MCF 10A (cell line): ENCODE measurements at regions of chr19 and their contacts with region 1.

Region 1: GRCh38 chr19:49443366-49444099 is 2.2 kb upstream of the SLC17A7 start:
- DNase-seq: peak; percentile 96
- H3K4me3 Mint-ChIP-seq: peak overlapping the region; percentile 75
- H3K27ac Mint-ChIP-seq: peak overlapping the region; percentile 85
- H3K4me1 Mint-ChIP-seq: peaks cover 28% of the 10 kb centered on the region
- H3K27me3 Mint-ChIP-seq: peaks cover 45% of the 10 kb centered on the region
- CTCF ChIP-seq: peak; percentile 63

Region 2: GRCh38 chr19:49272184-49272583 is 171.3 kb before region 1 on chr19:
- CTCF ChIA-PET with region 1: interaction called, 12 read pairs
- POLR2A ChIA-PET with region 1: no interaction called
- intact Hi-C with region 1: no loop called
- DNase-seq: peak; percentile 92
- H3K4me3 Mint-ChIP-seq: peak overlapping the region; percentile 7
- H3K27ac Mint-ChIP-seq: peak overlapping the region; percentile 90
- H3K4me1 Mint-ChIP-seq: peaks cover 13% of the 10 kb centered on the region
- H3K27me3 Mint-ChIP-seq: no peaks in the 10 kb centered on the region
- CTCF ChIP-seq: no peak

Region 3: GRCh38 chr19:49363268-49364082 is 80.1 kb before region 1 on chr19 and contains the start of gene DKKL1:
- CTCF ChIA-PET with region 1: interaction called, 3 read pairs
- POLR2A ChIA-PET with region 1: no interaction called
- intact Hi-C with region 1: loop called (anchors 1 kb)
- DNase-seq: peak; percentile 100
- H3K4me3 Mint-ChIP-seq: no peak within 1 kb of the TSS
- H3K27ac Mint-ChIP-seq: no peak within 1 kb of the TSS
- H3K4me1 Mint-ChIP-seq: no peaks in the 10 kb centered on the region
- H3K27me3 Mint-ChIP-seq: no peaks in the 10 kb centered on the region
- CTCF ChIP-seq: peak; percentile 4
- total RNA-seq, gene DKKL1: 0.56 TPM in 1 of 2 replicates, not detected in the other

Region 4: DNA sequence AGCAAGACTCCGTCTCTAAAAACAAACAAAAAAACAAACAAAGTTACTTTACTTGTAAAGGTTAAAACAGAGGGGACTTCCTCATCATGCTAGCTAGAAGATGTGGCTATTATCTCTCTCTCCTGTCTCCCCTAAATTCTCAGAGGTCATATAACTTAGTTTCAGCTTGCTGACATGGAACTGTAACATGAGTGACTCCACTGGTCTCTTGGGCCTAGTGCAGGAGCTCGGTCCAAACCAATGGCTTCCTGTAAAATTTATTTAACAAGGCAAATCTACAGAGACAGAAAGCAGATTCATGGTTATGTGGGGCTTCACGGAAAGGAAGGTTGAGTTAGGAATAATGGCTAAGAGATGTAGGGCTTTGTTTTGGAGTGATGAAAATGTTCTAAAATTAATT is 65.0 kb before region 1 on chr19:
- CTCF ChIA-PET with region 1: no interaction called
- POLR2A ChIA-PET with region 1: no interaction called
- intact Hi-C with region 1: no loop called
- DNase-seq: no peak
- H3K4me3 Mint-ChIP-seq: no peak overlapping the region
- H3K27ac Mint-ChIP-seq: no peak overlapping the region
- H3K4me1 Mint-ChIP-seq: no peaks in the 10 kb centered on the region
- H3K27me3 Mint-ChIP-seq: peaks cover 26% of the 10 kb centered on the region
- CTCF ChIP-seq: no peak

Region 5: GRCh38 chr19:49391581-49392399 is 51.7 kb before region 1 on chr19:
- CTCF ChIA-PET with region 1: interaction called, 30 read pairs
- POLR2A ChIA-PET with region 1: interaction called, 7 read pairs
- intact Hi-C with region 1: loop called (anchors 1 kb)
- DNase-seq: peak; percentile 86
- H3K4me3 Mint-ChIP-seq: no peak overlapping the region
- H3K27ac Mint-ChIP-seq: no peak overlapping the region
- H3K4me1 Mint-ChIP-seq: peaks cover 6% of the 10 kb centered on the region
- H3K27me3 Mint-ChIP-seq: peaks cover 23% of the 10 kb centered on the region
- CTCF ChIP-seq: peak; percentile 92